Endothelial cell of umbilical vein (primary cell): ENCODE measurements at regions of chr3 and their contacts with region 1.

Region 1: GRCh38 chr3:138426226-138426625 is 8.2 kb upstream of the ESYT3 start:
- DNase-seq: no peak
- H3K4me3 ChIP-seq: no peak overlapping the region
- H3K27ac ChIP-seq: no peak overlapping the region
- H3K4me1 ChIP-seq: no peaks in the 10 kb centered on the region
- H3K27me3 ChIP-seq: peaks cover 0 to 3% of the 10 kb centered on the region in 2 experiments
- CTCF ChIP-seq: peak; percentile 16 to 38
- POLR2A ChIP-seq: no peak

Region 2: GRCh38 chr3:138180375-138181029 is 245.7 kb before region 1 on chr3:
- CTCF ChIA-PET with region 1: no interaction called
- POLR2A ChIA-PET with region 1: no interaction called
- dilution Hi-C with region 1: no loop called
- intact Hi-C with region 1: loop called (anchors 2 kb)
- DNase-seq: peak; percentile 50
- H3K4me3 ChIP-seq: no peak overlapping the region
- H3K27ac ChIP-seq: no peak overlapping the region
- H3K4me1 ChIP-seq: no peaks in the 10 kb centered on the region
- H3K27me3 ChIP-seq: peaks cover 7 to 13% of the 10 kb centered on the region in 2 experiments
- CTCF ChIP-seq: peak; percentile 19 to 21
- POLR2A ChIP-seq: no peak

Region 3: GRCh38 chr3:138329127-138329983 is 96.9 kb before region 1 on chr3 and contains the start of gene NME9:
- CTCF ChIA-PET with region 1: interaction called, 3 read pairs
- POLR2A ChIA-PET with region 1: no interaction called
- dilution Hi-C with region 1: no loop called
- intact Hi-C with region 1: loop called (anchors 1 kb)
- DNase-seq: peak; percentile 88
- H3K4me3 ChIP-seq: peak within 1 kb of the TSS; percentile 32 to 53 (median 52)
- H3K27ac ChIP-seq: no peak within 1 kb of the TSS
- H3K4me1 ChIP-seq: peaks cover 20% of the 10 kb centered on the region
- H3K27me3 ChIP-seq: peaks cover 2 to 3% of the 10 kb centered on the region in 2 experiments
- CTCF ChIP-seq: peak; percentile 54 to 69
- POLR2A ChIP-seq: no peak
- total RNA-seq, gene NME9: not detected in 2 replicates

Region 4: DNA sequence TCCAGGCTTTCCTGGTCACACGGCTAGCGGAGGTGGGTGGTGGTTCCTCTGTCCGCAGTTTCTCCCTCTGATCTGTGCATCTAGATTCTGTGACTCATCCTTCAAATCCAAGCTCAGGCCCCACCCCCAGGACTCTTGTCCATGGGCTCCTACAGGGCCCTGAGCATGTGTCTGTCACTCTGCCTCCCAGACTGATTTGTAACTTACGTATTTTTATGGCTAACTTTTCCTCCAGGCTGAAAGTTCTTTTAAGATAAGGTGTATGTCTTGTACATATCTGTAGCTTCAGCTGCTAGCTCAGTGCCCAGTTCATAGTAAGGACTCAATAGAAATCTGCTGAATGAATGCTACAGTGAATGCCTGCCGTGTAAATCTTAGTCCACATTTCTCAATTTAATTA is 16.2 kb after region 1 on chr3:
- CTCF ChIA-PET with region 1: no interaction called
- POLR2A ChIA-PET with region 1: no interaction called
- dilution Hi-C with region 1: no loop called
- intact Hi-C with region 1: no loop called
- DNase-seq: no peak
- H3K4me3 ChIP-seq: no peak overlapping the region
- H3K27ac ChIP-seq: no peak overlapping the region
- H3K4me1 ChIP-seq: no peaks in the 10 kb centered on the region
- H3K27me3 ChIP-seq: peaks cover 2 to 3% of the 10 kb centered on the region in 2 experiments
- CTCF ChIP-seq: no peak
- POLR2A ChIP-seq: no peak

Region 5: DNA sequence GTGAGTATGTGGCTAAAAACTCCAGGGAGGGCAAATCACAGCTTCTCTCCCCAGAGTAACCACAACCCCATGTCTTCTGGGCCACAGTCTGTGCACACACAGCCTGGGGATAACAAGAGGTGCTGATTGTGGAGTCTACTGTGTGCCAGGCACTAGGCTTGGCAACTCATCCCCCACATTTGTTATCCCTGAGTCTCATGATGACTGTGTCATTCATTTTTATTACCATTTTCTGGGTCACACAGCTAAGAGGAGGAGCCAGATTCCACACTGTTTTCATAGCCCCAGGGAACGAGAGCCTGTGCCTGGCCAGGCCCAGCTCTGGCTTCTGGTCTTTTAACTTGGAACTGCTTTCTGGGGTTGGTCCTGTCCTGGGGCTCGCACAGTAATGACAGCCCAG is 42.7 kb after region 1 on chr3:
- CTCF ChIA-PET with region 1: no interaction called
- POLR2A ChIA-PET with region 1: no interaction called
- dilution Hi-C with region 1: no loop called
- intact Hi-C with region 1: no loop called
- DNase-seq: no peak
- H3K4me3 ChIP-seq: no peak overlapping the region
- H3K27ac ChIP-seq: no peak overlapping the region
- H3K4me1 ChIP-seq: peaks cover 6% of the 10 kb centered on the region
- H3K27me3 ChIP-seq: no peaks in the 10 kb centered on the region
- CTCF ChIP-seq: no peak
- POLR2A ChIP-seq: no peak

Region 6: DNA sequence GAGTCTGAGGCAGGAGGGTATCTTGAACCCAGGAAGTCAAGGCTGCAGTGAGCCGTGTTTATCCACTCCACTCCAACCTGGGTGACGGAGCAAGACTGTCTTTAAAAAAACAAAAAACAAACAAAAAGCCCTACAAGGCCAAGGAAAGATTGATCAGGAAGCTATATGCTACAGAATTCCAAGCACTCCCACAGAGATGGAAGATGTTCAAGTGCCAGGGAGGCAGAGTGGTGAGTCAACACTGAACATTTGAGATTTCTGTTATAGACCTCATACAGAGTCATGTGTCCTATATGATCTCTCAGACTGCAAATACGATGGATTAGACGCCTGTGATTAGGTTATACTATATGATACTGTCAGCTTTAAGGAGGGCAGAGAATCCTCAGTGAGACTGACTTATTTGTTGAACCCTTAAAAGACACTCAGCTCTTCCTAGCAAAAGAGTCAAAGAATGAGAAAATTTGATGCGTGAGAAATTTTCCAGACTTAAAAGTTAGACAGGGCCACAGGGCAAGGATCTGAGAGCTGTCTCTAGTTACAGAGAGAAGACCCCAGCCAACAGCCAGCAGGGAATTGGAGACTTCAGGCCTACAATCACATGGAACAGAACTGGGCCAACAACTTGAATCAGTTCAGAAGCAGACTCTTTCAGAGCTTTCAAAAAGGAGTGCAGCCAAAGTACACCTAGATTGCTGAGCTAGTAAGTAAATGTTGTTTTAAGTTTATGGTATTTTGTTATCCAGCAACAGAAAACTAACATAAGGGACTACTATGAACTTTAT is 300.9 kb after region 1 on chr3:
- CTCF ChIA-PET with region 1: no interaction called
- POLR2A ChIA-PET with region 1: no interaction called
- dilution Hi-C with region 1: no loop called
- intact Hi-C with region 1: no loop called
- DNase-seq: no peak
- H3K4me3 ChIP-seq: no peak overlapping the region
- H3K27ac ChIP-seq: no peak overlapping the region
- H3K4me1 ChIP-seq: peaks cover 2% of the 10 kb centered on the region
- H3K27me3 ChIP-seq: no peaks in the 10 kb centered on the region
- CTCF ChIP-seq: no peak
- POLR2A ChIP-seq: no peak